ENCODE measurements at regions of chr5 and their contacts with region 1.

Region 1: DNA sequence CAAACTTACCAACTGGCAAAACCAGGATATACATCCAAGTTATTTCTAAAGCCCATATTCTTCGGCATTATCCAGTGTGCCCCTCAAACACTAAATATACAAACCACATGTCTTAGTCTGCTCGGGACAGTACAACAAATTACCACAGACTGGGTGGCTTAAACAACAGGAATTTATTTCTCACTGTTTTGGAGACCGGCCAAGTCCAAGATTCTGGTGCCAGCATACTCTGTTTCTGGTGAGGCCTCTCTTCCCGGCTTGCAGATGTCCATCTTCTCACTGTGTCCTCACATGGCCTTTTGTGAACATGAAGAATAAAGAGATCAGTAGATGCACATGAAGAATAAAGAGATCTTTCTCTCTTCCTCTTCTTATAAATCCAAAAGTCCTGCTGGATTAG is 12.9 kb upstream of the SLCO6A1 start:
- DNase-seq: no peak
- H3K4me3 ChIP-seq: no peak overlapping the region
- H3K27ac ChIP-seq: no peak overlapping the region
- H3K4me1 ChIP-seq: no peaks in the 10 kb centered on the region
- H3K27me3 ChIP-seq: no peaks in the 10 kb centered on the region
- CTCF ChIP-seq: no peak
- EP300 ChIP-seq: no peak
- POLR2A ChIP-seq: no peak
- RAD21 ChIP-seq: no peak

Region 2: GRCh38 chr5:102450313-102450990 is 61.2 kb before region 1 on chr5:
- CTCF ChIA-PET with region 1: interaction called, 11 read pairs
- POLR2A ChIA-PET with region 1: no interaction called
- DNase-seq: peak; percentile 9 to 47
- H3K4me3 ChIP-seq: no peak overlapping the region
- H3K27ac ChIP-seq: no peak overlapping the region
- H3K4me1 ChIP-seq: peaks cover 0 to 2% (median 0%) of the 10 kb centered on the region in 4 experiments; a peak in 1 of 7 replicates
- H3K27me3 ChIP-seq: no peaks in the 10 kb centered on the region
- CTCF ChIP-seq: peak; percentile 48 to 79 (median 72)
- EP300 ChIP-seq: no peak
- POLR2A ChIP-seq: no peak
- RAD21 ChIP-seq: peak; percentile 85 to 88

Region 3: DNA sequence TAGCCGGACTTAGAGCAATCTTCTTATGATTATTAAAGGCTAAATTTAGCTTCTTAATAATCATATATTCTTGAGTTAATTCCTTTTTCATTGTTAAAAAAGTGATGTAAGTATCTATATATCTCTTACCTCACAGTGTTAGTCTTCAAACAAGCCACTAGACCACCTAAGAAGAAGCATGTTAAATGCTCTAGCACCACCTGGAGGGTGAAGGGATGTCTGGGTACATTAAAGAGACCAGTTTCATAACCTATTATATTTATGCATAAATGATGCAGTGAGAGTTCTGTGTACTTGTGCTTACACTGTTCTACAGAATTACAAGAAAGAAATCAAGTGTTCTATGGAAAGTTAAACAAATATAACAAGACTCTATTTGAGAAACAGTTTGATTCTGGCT is 43.1 kb after region 1 on chr5:
- CTCF ChIA-PET with region 1: no interaction called
- POLR2A ChIA-PET with region 1: no interaction called
- DNase-seq: no peak
- H3K4me3 ChIP-seq: no peak overlapping the region
- H3K27ac ChIP-seq: no peak overlapping the region
- H3K4me1 ChIP-seq: peaks cover 0 to 5% (median 1%) of the 10 kb centered on the region in 4 experiments; a peak in 2 of 7 replicates
- H3K27me3 ChIP-seq: no peaks in the 10 kb centered on the region
- CTCF ChIP-seq: peak in 2 of 3 experiments; percentile 31 to 38; a peak in 3 of 4 replicates
- EP300 ChIP-seq: no peak
- POLR2A ChIP-seq: no peak
- RAD21 ChIP-seq: peak; percentile 62 to 63

Measured in H1 (cell line).